ENCODE measurements at regions of chr9 and their contacts with region 1.

Region 1: DNA sequence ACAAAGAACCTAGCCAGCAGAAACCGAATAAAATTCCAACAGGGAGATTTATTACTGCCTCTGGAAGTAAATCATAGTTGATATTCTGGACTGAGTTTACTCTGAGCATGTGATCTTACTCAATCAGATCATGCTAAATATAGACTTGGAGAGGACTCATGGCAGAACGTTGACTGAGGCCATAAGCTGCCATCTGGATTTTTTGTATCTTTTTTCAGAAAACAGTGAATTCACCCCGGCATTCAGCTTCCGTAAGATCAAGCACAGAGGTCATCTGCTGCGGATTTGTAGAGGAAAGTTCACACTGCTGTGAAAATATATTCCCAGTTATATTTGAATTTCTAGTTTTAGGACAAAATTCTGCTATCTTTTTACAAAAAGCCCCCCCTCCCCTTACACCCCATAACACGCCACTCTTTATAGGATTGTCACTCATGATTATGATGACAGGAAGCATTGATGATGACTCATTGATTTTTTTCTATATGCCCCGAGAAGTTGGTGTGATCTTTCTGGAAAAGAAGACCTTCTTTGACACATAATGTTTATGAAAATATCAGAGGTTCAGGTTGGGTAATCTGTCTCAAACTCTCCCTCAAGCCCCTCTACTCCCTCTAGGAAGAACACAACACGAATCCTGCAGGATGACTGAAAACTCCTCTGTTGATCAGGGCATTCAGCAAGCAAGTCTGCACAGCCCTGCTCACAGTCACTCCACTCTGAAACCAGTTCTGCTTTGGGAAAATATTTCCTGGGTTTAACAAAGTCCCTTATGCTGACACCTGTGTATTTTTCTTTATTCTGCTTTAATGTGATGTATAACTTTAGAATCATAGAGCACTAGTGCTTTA is 70.8 kb downstream of the NXNL2 start:
- DNase-seq: no peak
- ATAC-seq: peak in 3 of 4 donors; percentile 61 to 78 (median 78)
- H3K4me3 ChIP-seq: no peak overlapping the region
- H3K27ac ChIP-seq: peak overlapping the region in 8 of 12 donors; percentile 24 to 71 (median 40)
- H3K4me1 ChIP-seq: peaks cover 0 to 20% (median 5%) of the 10 kb centered on the region in 12 donors
- H3K27me3 ChIP-seq: no peaks in the 10 kb centered on the region
- CTCF ChIP-seq: no peak
- POLR2A ChIP-seq: no peak

Region 2: GRCh38 chr9:88651682-88652633 is 46.2 kb after region 1 on chr9:
- intact Hi-C with region 1: loop called in 1 of 10 experiments (anchors 5 kb)
- DNase-seq: peak; percentile 79 to 87 (median 83)
- ATAC-seq: peak; percentile 80 to 97 (median 93)
- H3K4me3 ChIP-seq: no peak overlapping the region
- H3K27ac ChIP-seq: peak overlapping the region in 9 of 12 donors; percentile 7 to 71 (median 36)
- H3K4me1 ChIP-seq: peaks cover 0 to 20% (median 4%) of the 10 kb centered on the region in 12 donors
- H3K27me3 ChIP-seq: peaks cover 0 to 3% (median 0%) of the 10 kb centered on the region in 9 donors
- CTCF ChIP-seq: peak in 5 of 12 donors; percentile 7 to 34 (median 20)
- POLR2A ChIP-seq: no peak

Region 3: DNA sequence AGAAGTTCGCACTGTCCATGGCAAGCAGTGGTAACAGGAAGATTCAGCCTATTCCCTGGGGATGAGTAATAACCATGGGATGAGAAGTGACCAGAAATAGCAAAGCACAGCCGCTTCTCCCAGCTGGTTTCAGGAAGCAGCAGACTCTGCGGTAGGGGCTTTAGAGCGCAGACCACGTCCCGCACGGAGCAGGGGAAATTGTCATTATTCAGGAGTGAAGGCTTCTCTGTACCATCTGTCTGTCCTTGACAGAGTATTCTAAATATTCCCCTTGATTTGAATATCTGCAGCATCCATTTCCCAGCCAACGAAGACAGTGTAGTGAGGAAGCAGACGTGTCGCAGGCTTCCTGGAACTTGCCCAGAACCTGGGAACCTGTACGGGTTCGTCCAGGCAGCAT is 88.9 kb after region 1 on chr9:
- intact Hi-C with region 1: loop called in 1 of 10 experiments (anchors 5 kb)
- DNase-seq: peak in 2 of 5 donors; percentile 27 to 44
- ATAC-seq: peak in 2 of 4 donors; percentile 56 to 75
- H3K4me3 ChIP-seq: no peak overlapping the region
- H3K27ac ChIP-seq: peak overlapping the region in 7 of 12 donors; percentile 6 to 51 (median 27)
- H3K4me1 ChIP-seq: no peaks in the 10 kb centered on the region
- H3K27me3 ChIP-seq: no peaks in the 10 kb centered on the region
- CTCF ChIP-seq: no peak
- POLR2A ChIP-seq: no peak

Region 4: DNA sequence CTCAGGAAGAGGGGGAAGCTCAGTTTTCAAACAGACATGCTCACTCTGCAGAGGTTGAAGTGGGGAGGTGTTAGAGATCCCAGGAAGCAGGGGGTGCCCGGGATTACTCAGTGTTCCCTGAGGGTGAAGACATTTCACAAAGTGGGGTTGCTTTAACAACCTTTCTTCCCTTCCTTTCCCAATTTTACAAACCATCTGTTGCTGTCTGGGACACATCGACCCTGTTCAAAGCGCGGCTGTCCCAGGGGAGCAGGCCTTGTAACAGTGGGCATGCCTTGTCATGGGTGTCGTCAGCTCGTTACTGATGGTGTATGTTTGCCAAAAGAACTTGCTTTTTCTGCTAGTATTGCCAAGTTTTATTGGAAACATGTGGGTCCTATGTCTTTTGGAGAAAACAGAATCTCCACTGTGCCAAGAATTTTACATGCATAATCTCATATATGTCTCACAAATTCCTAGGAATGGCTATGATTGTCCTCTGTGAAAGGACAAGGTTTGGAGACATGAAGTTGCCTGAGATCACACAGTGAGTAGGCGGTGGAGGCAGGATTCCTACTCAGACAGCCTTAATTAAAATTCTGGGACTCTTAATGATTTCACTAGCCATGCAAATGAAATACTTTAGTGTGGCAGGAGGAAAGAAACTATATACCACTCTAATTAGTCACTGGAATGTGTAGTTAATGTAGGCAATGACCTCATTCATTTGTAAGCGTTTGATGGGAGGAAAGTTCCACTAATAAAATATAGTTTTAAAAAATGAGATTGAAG is 128.1 kb after region 1 on chr9:
- intact Hi-C with region 1: loop called in 2 of 10 experiments (anchors 10 kb)
- DNase-seq: peak in 2 of 5 donors; percentile 72 to 89
- ATAC-seq: peak in 2 of 4 donors; percentile 54 to 66
- H3K4me3 ChIP-seq: no peak overlapping the region
- H3K27ac ChIP-seq: peak overlapping the region in 4 of 12 donors; percentile 13 to 64 (median 63)
- H3K4me1 ChIP-seq: peaks cover 0 to 23% (median 3%) of the 10 kb centered on the region in 12 donors
- H3K27me3 ChIP-seq: no peaks in the 10 kb centered on the region
- CTCF ChIP-seq: no peak
- POLR2A ChIP-seq: no peak

Measured in heart left ventricle (tissue), 16 donors.